Breast epithelium (tissue), 4 donors: ENCODE measurements at regions of chr4 and their contacts with region 1.

Region 1: GRCh38 chr4:116866106-116866505 is 219.3 kb downstream of the TRAM1L1 start:
- DNase-seq: no peak
- H3K4me3 ChIP-seq: no peak overlapping the region
- H3K27ac ChIP-seq: no peak overlapping the region
- H3K4me1 ChIP-seq: no peaks in the 10 kb centered on the region
- H3K27me3 ChIP-seq: no peaks in the 10 kb centered on the region
- CTCF ChIP-seq: no peak
- POLR2A ChIP-seq: no peak

Region 2: DNA sequence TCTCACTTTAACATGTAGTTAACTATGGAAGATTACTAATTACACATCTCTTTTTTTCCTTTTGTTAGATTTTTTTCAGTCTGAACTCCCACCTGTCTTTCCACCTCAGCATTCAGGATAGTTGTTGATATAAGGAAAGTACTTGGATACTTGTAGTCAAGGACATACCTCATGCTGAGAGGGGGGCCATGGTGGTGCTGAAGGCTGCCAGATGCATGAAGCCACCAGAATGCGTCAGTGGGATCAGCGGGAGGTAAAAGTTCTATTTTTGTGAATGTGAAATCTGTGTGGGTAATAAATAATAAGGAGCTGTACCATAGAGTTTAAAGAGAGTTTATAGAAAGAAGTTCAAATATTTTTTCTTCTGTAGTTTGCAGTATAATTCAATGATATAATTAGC is 1739.6 kb before region 1 on chr4:
- intact Hi-C with region 1: loop called (anchors 5 kb)
- DNase-seq: no peak
- H3K4me3 ChIP-seq: no peak overlapping the region
- H3K27ac ChIP-seq: no peak overlapping the region
- H3K4me1 ChIP-seq: no peaks in the 10 kb centered on the region
- H3K27me3 ChIP-seq: no peaks in the 10 kb centered on the region
- CTCF ChIP-seq: no peak
- POLR2A ChIP-seq: no peak

Region 3: DNA sequence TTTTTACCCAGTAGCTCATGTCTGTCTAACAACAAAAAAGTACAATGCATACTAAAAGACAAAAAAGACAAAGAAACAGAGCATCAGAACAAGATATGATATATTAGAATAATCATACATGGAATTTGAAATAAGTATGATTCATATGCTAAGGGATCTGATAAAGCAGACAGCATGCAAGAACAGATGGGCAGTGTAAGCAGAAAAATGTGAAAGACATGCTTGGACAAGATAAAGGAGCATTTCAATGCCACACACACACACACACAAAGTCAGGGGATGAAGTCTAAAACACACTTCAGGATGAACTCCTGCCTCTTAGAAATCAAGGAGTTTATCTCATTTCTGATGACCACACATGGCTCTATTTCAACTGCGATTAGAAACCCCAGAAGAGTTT is 1103.1 kb before region 1 on chr4:
- intact Hi-C with region 1: loop called (anchors 10 kb)
- DNase-seq: no peak
- H3K4me3 ChIP-seq: no peak overlapping the region
- H3K27ac ChIP-seq: no peak overlapping the region
- H3K4me1 ChIP-seq: no peaks in the 10 kb centered on the region
- H3K27me3 ChIP-seq: no peaks in the 10 kb centered on the region
- CTCF ChIP-seq: no peak
- POLR2A ChIP-seq: no peak